ENCODE measurements at regions of chr17 and their contacts with region 1.

Region 1: DNA sequence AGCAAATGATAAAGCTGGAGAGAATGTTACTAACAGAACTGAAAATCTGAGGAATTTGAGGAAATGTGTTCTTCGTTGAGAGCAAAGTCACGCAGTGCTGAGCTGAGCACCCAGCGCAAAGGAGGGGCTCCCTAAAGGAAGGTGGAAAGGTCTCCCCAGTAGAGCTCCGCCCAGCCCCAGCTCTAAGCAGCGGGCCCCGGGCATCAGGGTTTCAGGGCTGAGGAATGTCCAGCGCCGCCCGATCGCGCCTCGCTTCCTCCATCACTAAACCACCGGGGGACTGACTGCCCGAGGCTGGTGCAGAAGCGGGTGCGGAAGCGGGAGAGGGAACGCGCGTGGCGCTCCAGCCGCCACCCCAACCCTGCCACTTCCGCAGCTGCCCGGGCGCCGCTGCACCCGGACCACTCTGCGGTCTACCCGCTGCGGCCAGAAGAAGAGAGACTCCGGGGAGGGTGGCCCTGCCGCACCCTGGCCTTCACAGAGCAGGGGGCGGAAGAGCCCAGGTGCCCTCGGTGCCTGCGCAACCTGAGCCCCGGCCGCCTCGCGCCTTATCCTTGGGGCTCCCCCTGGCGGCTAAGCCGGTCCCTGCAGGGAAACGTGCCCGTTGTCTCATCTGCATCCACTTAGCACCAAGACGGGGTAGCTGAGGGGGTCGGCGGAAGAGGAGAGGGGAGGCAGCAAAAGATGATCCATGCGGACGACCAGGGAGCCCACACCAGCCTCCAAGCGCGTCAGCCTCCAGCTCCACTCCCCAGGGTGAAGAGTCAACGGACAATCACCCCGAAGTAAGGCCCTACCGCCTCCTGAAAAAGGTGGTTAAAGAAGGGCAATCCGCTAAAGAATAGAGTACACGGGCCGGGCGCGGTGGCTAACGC is 12.4 kb upstream of the GUCY2D start:
- H3K4me3 ChIP-seq: peak overlapping the region; percentile 59
- H3K27ac ChIP-seq: peak overlapping the region; percentile 29; the same call in 1 of the 2 replicates
- H3K4me1 ChIP-seq: no peaks in the 10 kb centered on the region
- CTCF ChIP-seq: peak; percentile 98

Region 2: DNA sequence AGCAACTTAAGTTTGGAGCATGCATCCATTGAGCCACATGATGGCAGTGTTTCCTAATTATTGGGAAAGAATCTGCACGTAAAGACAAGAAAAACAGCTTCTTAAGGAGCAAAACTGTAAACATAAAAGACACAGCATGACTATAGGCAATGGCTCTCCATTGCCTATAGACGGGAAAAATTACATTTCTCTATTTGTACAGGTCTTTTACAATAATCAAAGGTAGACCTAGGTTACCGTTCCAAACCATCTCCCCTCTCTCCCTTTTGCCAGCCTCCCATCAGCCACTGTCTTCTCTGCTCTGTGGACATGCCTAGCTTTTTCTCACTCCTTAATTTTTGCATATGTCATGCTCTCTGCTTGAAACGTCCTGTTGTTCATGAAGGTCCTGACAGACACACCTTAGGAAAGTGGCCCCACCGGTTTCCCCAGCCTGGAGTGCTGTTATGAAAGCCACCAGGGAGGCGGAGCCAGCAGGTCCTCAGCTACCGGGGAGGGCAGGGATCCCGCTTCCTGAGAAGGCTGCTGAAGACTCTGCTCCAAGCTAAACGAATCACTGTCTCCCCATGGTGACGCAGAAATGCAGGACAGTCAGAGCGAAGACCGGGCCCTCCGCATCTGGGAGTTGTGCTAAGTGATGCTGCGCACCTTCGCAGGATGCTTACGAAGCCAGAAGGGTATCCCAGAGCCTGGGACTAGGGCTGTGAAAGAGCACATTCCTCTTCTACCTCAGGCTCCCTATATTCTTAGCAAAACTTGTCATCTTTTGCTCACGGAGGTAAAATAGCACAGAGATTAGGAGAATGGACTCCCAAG is 943.9 kb before region 1 on chr17:
- CTCF ChIA-PET with region 1: no interaction called
- POLR2A ChIA-PET with region 1: no interaction called
- H3K4me3 ChIP-seq: peak overlapping the region; percentile 0
- H3K27ac ChIP-seq: peak overlapping the region; percentile 34; the same call in 1 of the 2 replicates
- H3K4me1 ChIP-seq: peaks cover 6% of the 10 kb centered on the region; the same call in 1 of the 2 replicates
- CTCF ChIP-seq: peak; percentile 76

Region 3: DNA sequence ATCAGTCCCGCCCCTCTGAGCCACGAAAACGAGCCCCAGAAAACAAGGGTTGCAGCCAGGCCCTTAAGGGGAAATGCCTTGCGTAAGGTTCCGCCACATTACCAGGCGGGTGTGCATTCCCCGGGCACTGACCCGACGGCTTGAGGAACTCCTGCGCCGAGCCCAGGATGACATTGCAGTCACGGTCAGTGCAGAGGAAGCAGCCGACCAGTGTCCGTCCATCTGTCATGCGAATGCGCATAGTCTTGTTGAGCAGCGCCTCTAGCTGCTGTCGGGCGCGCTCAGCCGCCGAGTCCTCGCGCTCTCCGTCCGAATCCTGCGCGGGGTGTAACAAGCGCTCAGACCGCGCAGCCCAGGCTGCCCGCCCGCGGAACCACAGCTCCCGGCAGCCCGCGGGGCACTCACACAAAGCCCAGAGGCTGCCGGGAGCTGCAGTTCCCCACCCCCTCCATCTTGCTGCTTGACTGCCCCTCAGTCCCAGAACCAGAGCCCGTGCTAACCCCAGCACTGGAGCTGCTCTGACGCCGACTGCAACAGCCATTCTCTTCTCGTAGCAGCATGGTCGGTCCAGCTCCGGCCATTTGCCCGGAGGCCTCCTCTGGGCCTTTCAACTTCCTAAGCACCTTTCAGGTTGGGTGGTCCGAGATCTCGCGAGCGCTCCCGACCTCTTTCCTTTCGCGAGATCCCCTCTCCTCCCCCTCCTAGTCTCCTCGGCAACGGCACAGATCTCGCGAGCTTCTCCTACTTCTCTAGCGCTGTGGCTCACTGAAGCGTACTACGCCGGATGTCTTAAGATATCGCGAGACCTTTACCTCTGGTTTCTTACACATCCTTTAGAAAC is 132.9 kb before region 1 on chr17 and contains the start of gene NAA38:
- CTCF ChIA-PET with region 1: interaction called, 141 read pairs
- POLR2A ChIA-PET with region 1: no interaction called
- H3K4me3 ChIP-seq: peak within 1 kb of the TSS; percentile 88
- H3K27ac ChIP-seq: peak within 1 kb of the TSS; percentile 90
- H3K4me1 ChIP-seq: peaks cover 8% of the 10 kb centered on the region; the same call in 1 of the 2 replicates
- CTCF ChIP-seq: peak; percentile 97

Region 4: GRCh38 chr17:7915611-7916382 is 74.2 kb before region 1 on chr17 and contains the start of gene RNF227:
- CTCF ChIA-PET with region 1: interaction called, 92 read pairs
- POLR2A ChIA-PET with region 1: interaction called, 5 read pairs
- H3K4me3 ChIP-seq: peak within 1 kb of the TSS; percentile 58
- H3K27ac ChIP-seq: peak within 1 kb of the TSS; percentile 90
- H3K4me1 ChIP-seq: peaks cover 14% of the 10 kb centered on the region
- CTCF ChIP-seq: no peak; the same call in 1 of the 2 replicates

Region 5: GRCh38 chr17:8005960-8006730 is 16.1 kb after region 1 on chr17:
- CTCF ChIA-PET with region 1: interaction called, 32 read pairs
- POLR2A ChIA-PET with region 1: interaction called, 3 read pairs
- H3K4me3 ChIP-seq: no peak overlapping the region
- H3K27ac ChIP-seq: no peak overlapping the region
- H3K4me1 ChIP-seq: no peaks in the 10 kb centered on the region
- CTCF ChIP-seq: no peak

Region 6: DNA sequence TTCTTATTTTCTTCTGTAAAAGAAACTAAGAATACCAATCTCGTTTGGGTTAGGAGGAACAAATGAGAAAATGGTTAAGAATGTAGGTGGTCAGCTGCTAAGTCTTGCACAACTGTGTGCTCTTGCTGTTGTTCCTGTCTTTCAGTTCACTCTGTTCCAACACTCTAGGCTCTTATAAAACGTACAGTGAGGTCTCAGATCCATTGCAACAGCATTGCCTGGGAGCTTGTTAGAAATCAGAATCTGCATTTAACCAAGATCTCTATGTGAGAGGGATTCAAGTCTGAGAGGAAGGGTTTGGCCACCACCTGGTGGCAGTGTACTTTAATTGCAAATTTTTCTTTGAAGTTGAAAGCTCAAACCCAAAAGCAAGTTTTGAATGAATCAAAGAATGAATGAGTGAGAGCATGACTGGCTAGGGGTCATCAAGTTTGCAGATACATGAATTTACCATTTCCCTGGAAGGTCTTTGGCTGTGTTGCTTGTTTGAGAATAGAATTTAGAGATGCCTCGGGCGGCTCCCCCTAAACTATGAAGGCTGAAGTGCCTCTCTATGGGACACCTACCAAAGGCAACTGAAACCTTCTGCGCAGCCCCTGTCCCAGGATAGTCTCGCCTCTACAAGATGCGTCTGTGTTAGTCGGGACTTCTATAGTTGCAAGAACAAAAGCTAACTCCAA is 51.4 kb after region 1 on chr17:
- CTCF ChIA-PET with region 1: interaction called, 68 read pairs
- POLR2A ChIA-PET with region 1: interaction called, 3 read pairs
- H3K4me3 ChIP-seq: no peak overlapping the region
- H3K27ac ChIP-seq: no peak overlapping the region
- H3K4me1 ChIP-seq: no peaks in the 10 kb centered on the region
- CTCF ChIP-seq: peak; percentile 64